ENCODE measurements at regions of chr1 and their contacts with region 1.

Region 1: DNA sequence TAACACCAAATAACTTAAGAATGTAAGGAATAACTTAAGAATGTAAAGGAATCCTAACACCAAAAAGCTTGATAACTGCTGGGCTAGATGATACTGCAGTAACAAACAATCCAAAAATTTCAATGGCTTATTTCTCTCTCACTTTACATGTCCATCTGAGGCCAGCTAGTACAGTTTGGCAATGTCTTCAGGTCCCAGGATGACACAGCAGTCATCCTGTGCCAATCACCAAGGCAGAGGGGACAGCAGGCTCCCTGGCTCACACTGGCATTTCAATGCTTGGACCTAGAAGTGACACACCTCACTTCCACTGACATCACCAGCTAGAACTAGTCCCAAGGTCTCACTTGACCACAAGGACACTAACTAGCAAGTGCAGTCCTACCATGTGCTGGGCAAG is 15.3 kb downstream of the DNAJC11 start:
- DNase-seq: no peak
- ATAC-seq: peak; percentile 89

Region 2: GRCh38 chr1:6634371-6635052 is 51.8 kb before region 1 on chr1:
- intact Hi-C with region 1: no loop called
- DNase-seq: no peak
- ATAC-seq: peak; percentile 72

Region 3: GRCh38 chr1:6672558-6672957 is 13.7 kb before region 1 on chr1:
- intact Hi-C with region 1: loop called (anchors 2 kb)
- DNase-seq: no peak
- ATAC-seq: peak; percentile 94

Region 4: GRCh38 chr1:6898974-6899539 is 212.8 kb after region 1 on chr1:
- intact Hi-C with region 1: no loop called
- DNase-seq: no peak
- ATAC-seq: no peak

Measured in Right ventricle myocardium inferior (tissue), 1 donor.